ENCODE measurements at regions of chr3 and their contacts with region 1.

Region 1: DNA sequence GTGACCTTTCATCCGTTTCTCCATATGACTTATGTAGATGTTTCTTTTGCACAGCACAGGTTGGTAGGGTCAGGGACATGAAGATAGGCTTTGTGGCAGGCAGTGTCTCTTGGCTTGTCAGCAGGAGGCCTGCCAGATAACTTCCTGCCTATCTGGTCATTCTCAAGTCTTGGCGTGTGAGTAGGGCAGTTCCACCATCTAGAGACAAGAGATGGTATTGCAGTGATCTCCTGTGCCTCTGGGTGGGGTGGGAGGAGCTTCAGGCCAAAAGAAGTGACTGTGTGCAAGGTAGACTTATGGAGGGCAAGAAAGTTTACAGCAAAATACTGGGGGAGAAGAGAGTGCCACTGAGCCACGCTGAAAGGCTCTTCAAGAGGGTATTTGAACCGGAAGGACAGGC is 11.0 kb downstream of the TEX264 start:
- DNase-seq: peak; percentile 61 to 65
- H3K4me3 ChIP-seq: no peak overlapping the region
- H3K27ac ChIP-seq: no peak overlapping the region
- H3K4me1 ChIP-seq: peaks cover 0 to 9% (median 3%) of the 10 kb centered on the region in 4 experiments; a peak in 3 of 7 replicates
- H3K27me3 ChIP-seq: no peaks in the 10 kb centered on the region
- CTCF ChIP-seq: peak; percentile 72 to 94 (median 78)
- EP300 ChIP-seq: no peak
- POLR2A ChIP-seq: no peak
- RAD21 ChIP-seq: peak; percentile 93

Region 2: DNA sequence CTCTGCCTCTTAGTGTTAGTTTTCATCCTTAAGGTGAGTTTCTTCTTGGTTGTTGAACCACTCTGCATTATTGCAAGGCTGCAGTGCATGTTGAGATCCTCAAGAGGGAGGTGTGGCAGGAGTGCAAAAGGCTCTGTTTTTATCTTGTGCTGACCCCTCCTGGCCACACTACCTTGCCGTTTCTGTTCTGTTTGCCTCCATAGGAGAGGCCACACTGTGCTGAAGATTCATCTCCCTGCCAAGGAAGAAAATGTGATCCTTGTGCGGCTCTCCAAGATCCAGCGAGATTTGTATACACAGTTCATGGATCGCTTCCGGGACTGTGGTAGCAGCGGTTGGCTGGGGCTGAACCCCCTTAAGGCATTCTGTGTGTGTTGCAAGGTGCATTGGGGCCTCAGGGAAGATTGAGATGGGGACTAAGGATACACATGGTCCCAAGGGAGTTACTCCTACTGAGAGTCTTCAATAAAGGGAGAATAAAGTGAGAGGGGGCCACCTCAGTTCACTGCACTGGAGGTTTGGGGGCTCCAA is 44.1 kb before region 1 on chr3:
- CTCF ChIA-PET with region 1: interaction called, 45 read pairs
- POLR2A ChIA-PET with region 1: no interaction called
- DNase-seq: peak; percentile 58 to 67
- H3K4me3 ChIP-seq: no peak overlapping the region
- H3K27ac ChIP-seq: no peak overlapping the region
- H3K4me1 ChIP-seq: no peaks in the 10 kb centered on the region
- H3K27me3 ChIP-seq: no peaks in the 10 kb centered on the region
- CTCF ChIP-seq: peak; percentile 82 to 100 (median 100)
- EP300 ChIP-seq: no peak
- POLR2A ChIP-seq: no peak
- RAD21 ChIP-seq: peak; percentile 84

Region 3: GRCh38 chr3:51646091-51646490 is 36.0 kb before region 1 on chr3:
- CTCF ChIA-PET with region 1: interaction called, 45 read pairs
- POLR2A ChIA-PET with region 1: no interaction called
- DNase-seq: no peak
- H3K4me3 ChIP-seq: no peak overlapping the region
- H3K27ac ChIP-seq: no peak overlapping the region
- H3K4me1 ChIP-seq: no peaks in the 10 kb centered on the region
- H3K27me3 ChIP-seq: no peaks in the 10 kb centered on the region
- CTCF ChIP-seq: no peak
- EP300 ChIP-seq: no peak
- POLR2A ChIP-seq: no peak
- RAD21 ChIP-seq: no peak

Region 4: DNA sequence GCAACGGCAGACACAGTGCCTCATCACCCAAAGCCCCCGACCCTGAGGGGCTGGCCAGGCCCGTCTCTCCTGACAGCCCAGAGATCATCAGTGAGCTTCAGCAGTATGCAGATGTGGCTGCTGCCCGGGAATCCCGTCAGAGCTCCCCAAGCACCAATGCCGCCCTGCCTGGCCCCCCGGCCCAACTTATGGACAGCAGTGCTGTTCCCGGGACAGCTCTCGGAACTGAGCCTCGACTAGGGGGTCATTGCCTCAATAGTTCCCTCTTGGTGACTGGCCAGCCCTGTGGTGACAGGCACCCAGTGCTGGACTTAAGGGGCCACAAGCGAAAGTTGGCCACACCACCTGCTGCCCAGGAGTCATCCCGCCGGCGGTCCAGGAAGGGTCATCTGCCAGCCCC is 19.6 kb before region 1 on chr3:
- CTCF ChIA-PET with region 1: interaction called, 123 read pairs
- POLR2A ChIA-PET with region 1: no interaction called
- DNase-seq: no peak
- H3K4me3 ChIP-seq: no peak overlapping the region
- H3K27ac ChIP-seq: no peak overlapping the region
- H3K4me1 ChIP-seq: no peaks in the 10 kb centered on the region
- H3K27me3 ChIP-seq: no peaks in the 10 kb centered on the region
- CTCF ChIP-seq: no peak
- EP300 ChIP-seq: no peak
- POLR2A ChIP-seq: no peak
- RAD21 ChIP-seq: no peak

Region 5: GRCh38 chr3:51696954-51697353 is 14.9 kb after region 1 on chr3:
- CTCF ChIA-PET with region 1: interaction called, 61 read pairs
- POLR2A ChIA-PET with region 1: no interaction called
- DNase-seq: no peak
- H3K4me3 ChIP-seq: no peak overlapping the region
- H3K27ac ChIP-seq: no peak overlapping the region
- H3K4me1 ChIP-seq: no peaks in the 10 kb centered on the region
- H3K27me3 ChIP-seq: peaks cover 0 to 1% (median 0%) of the 10 kb centered on the region in 4 experiments; a peak in 1 of 7 replicates
- CTCF ChIP-seq: no peak
- EP300 ChIP-seq: no peak
- POLR2A ChIP-seq: no peak
- RAD21 ChIP-seq: no peak

Region 6: DNA sequence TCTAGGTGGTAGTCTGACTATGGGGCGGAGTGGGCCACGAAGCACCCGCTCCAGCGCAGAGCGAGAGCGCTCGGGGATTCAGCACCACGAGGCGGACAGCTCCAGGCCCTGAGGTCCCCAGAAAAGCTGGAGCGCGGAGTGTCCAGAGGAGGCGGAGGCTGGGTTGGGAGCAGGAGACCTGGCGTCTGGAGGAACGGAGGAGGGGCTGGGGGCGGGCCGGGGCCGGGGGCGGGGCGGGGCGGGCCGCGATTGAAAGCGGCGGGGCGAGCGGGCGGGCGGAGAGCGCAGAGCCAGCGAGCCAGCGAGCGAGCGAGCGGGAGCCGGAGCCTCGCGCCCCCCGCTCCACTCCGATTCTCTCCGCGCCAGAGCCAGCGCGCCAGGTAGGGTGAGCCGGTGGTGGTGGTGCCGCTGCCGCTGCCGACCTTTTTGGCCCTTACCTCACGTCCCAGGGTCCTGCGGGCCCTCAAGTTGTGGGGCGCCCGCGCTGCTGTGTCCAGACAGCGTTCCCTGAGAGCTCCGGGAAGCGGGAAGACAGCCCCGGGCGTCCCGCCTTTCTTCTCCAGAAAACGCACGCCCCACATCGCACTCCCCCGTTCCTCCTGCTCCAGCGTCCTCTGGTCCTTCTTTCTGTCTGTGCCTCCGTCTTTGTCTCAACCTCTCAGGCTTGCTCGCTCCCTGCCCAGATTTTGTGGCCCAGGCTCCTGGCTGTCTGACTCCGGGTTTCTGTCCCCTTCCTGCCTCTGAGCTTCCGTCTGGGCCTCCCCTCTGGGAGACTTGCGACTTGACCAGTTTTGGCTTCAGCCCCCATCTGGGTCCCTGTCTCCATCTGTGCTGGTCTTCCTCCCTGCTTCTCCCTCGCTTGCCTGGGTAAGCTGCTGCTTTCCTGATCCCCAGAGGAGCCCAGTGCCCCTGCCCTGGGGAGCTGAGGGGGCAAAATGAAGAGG is 25.0 kb after region 1 on chr3 and contains the start of gene GRM2:
- CTCF ChIA-PET with region 1: interaction called, 61 read pairs
- POLR2A ChIA-PET with region 1: interaction called, 7 read pairs
- DNase-seq: peak; percentile 53 to 90
- H3K4me3 ChIP-seq: peak within 1 kb of the TSS; percentile 49 to 79 (median 74)
- H3K27ac ChIP-seq: no peak within 1 kb of the TSS
- H3K4me1 ChIP-seq: peaks cover 0 to 34% (median 22%) of the 10 kb centered on the region in 4 experiments; a peak in 6 of 7 replicates
- H3K27me3 ChIP-seq: peaks cover 13 to 24% (median 23%) of the 10 kb centered on the region in 4 experiments; a peak in 6 of 7 replicates
- CTCF ChIP-seq: no peak; a peak in 1 of 4 replicates
- EP300 ChIP-seq: peak in 1 of 2 experiments; percentile 37; a peak in 1 of 3 replicates
- POLR2A ChIP-seq: peak in 1 of 2 experiments; percentile 46; a peak in 1 of 3 replicates
- RAD21 ChIP-seq: peak; percentile 4 to 16; a peak in 1 of 4 replicates
- total RNA-seq, gene GRM2: 3.9 and 4.3 TPM in 2 replicates

Region 7: GRCh38 chr3:51845129-51845528 is 163.1 kb after region 1 on chr3:
- CTCF ChIA-PET with region 1: no interaction called
- POLR2A ChIA-PET with region 1: no interaction called
- DNase-seq: peak in 1 of 2 experiments; percentile 34
- H3K4me3 ChIP-seq: no peak overlapping the region
- H3K27ac ChIP-seq: no peak overlapping the region
- H3K4me1 ChIP-seq: peaks cover 0 to 3% (median 0%) of the 10 kb centered on the region in 4 experiments; a peak in 3 of 7 replicates
- H3K27me3 ChIP-seq: no peaks in the 10 kb centered on the region
- CTCF ChIP-seq: no peak
- EP300 ChIP-seq: no peak
- POLR2A ChIP-seq: no peak
- RAD21 ChIP-seq: peak in 1 of 2 experiments; percentile 1; a peak in 1 of 4 replicates